AG04450 (cell line): ENCODE measurements at regions of chr1 and their contacts with region 1.

Region 1: GRCh38 chr1:155135415-155136028 is at the start of gene SLC50A1:
- DNase-seq: peak; percentile 79
- H3K4me3 ChIP-seq: peak within 1 kb of the TSS; percentile 94
- H3K27ac ChIP-seq: peak within 1 kb of the TSS; percentile 100
- H3K27me3 ChIP-seq: no peaks in the 10 kb centered on the region
- CTCF ChIP-seq: peak; percentile 15; the same call in 1 of the 2 replicates
- polyA plus RNA-seq, gene SLC50A1: 29.5 and 31.4 TPM in 2 replicates

Region 2: GRCh38 chr1:155103325-155103724 is 32.2 kb before region 1 on chr1:
- CTCF ChIA-PET with region 1: no interaction called
- POLR2A ChIA-PET with region 1: no interaction called
- DNase-seq: no peak
- H3K4me3 ChIP-seq: no peak overlapping the region
- H3K27ac ChIP-seq: no peak overlapping the region
- H3K27me3 ChIP-seq: peaks cover 18% of the 10 kb centered on the region
- CTCF ChIP-seq: no peak

Region 3: DNA sequence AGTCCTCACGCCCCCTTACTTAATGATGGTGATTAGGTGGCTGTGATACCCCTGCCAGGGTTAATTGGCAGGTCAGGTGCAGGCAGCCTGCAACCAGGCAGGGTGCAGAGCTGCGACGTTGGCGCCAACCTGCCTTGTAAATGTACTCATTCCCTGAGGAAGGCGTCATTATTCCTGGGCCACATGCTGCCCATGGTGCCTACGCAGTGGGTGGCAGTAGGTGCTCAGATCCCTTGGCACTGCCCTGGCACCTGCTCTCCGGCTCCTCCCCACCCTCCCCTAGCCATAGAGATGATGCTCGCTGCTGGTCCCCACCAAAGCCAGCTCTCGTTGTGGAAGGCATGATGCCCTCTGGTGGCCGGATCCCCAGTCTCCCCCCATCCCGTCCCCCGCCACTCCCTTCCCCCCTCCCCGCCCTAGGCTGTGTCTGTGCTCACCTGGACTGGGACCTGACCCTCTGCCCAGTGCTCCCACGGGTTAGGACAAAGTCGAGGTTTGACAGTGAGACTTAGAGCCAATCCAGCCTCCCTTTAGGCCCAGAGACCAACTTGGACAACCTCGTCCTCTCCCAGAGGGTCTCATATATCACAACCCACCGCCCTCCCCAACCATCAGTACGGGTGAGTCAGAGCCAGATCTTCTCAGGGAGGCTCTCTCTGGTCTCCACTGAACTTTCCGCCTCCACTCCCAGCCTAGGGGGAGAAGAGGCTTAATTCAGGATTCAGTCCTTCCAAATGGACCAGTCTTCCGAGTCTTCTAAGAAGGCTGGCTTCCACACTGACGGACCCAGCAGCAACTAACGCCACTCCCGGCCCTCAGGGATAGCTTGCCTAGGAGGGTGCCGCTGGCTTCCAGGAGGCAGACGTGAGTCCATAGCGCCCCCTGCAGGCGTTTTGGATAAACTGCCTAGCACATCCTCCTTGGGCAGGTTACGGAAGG is 31.9 kb after region 1 on chr1:
- CTCF ChIA-PET with region 1: interaction called, 11 read pairs
- POLR2A ChIA-PET with region 1: interaction called, 3 read pairs
- DNase-seq: peak; percentile 54
- H3K4me3 ChIP-seq: no peak overlapping the region
- H3K27ac ChIP-seq: no peak overlapping the region
- H3K27me3 ChIP-seq: no peaks in the 10 kb centered on the region
- CTCF ChIP-seq: peak; percentile 89